HEK293 (cell line): ENCODE measurements at regions of chr12 and their contacts with region 1.

Region 1: GRCh38 chr12:113912760-113913329 is 53.3 kb downstream of the RBM19 start:
- H3K4me3 ChIP-seq: no peak overlapping the region
- H3K27ac ChIP-seq: no peak overlapping the region
- H3K4me1 ChIP-seq: no peaks in the 10 kb centered on the region
- CTCF ChIP-seq: peak; percentile 75

Region 2: DNA sequence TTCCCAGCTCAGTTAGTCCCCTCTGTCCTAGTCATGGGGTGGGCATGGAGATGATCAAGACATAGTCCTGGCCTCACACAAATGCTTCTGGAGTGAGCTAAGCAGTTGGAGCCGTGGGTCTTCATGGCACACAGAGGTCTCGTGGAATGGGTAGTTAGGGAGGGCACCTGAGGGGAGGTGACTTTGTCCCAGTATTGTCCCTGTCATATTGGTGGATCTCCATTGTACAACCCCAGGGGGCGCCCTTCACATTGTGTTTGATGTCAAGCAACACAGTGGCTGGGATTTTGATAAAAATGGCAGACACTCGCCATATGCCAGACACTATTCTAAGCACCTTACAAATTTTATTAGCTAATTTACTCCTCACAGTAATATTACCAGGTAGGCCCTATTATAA is 265.8 kb before region 1 on chr12:
- CTCF ChIA-PET with region 1: interaction called, 12 read pairs
- POLR2A ChIA-PET with region 1: no interaction called
- H3K4me3 ChIP-seq: no peak overlapping the region
- H3K27ac ChIP-seq: no peak overlapping the region
- H3K4me1 ChIP-seq: no peaks in the 10 kb centered on the region
- CTCF ChIP-seq: no peak

Region 3: GRCh38 chr12:114018669-114019068 is 105.8 kb after region 1 on chr12:
- CTCF ChIA-PET with region 1: no interaction called
- POLR2A ChIA-PET with region 1: no interaction called
- H3K4me3 ChIP-seq: no peak overlapping the region
- H3K27ac ChIP-seq: no peak overlapping the region
- H3K4me1 ChIP-seq: no peaks in the 10 kb centered on the region
- CTCF ChIP-seq: no peak

Region 4: DNA sequence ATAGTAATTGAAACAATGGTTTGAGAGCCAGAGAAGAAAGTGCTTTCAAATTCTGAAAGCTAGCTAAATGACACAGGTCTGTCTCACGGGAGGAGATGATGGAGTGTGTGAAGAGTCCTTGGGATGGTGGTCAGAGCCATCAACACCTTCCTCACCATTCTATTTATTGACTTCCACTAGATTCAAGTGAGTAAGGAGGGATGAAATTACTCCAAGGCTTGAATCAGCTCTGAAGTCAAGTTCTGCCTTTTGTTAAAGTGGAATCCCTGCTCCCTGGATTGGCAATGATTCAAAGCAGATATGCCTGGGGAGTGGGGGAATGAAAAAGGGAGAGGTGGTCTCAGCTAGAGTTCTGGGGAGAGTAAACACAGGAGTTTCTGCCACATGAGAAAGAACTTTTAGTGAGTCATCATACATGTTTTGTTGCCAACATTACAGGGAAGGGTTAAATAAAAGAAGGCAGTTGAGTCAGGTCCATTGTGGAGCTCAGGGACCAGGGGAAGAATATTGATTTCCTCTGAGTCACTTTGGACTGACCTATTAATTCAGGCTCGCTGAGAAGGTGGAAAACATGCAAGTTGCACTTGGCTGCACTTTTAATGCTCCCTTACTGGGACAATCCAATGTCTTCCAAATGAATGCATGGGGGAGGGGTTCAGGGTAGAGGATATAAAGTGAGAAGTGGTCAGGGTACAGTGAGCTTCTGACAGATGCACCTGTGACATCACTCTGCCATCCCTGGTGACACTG is 350.4 kb after region 1 on chr12:
- CTCF ChIA-PET with region 1: no interaction called
- POLR2A ChIA-PET with region 1: no interaction called
- H3K4me3 ChIP-seq: no peak overlapping the region
- H3K27ac ChIP-seq: no peak overlapping the region
- H3K4me1 ChIP-seq: no peaks in the 10 kb centered on the region
- CTCF ChIP-seq: no peak